MCF 10A (cell line): ENCODE measurements at regions of chr4 and their contacts with region 1.

Region 1: DNA sequence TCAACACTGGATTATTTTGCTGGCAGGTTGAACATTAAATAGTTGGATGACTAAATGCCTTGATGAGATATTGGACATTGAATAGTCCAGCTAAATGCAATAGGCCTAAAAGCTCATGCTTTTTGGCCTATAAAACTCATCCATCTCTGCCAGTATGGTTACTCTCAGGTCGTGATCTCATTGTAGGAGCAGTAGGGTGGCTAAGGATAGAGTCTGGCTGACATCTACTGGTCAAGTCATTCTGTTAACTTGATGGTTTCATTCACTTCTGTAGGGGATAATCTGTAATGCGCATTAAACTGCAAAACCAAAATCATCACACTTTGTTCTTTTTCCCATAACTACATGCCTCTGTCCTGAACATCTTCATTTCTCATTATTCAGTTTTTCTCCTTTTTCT is 227.0 kb downstream of the DKK2 start:
- DNase-seq: peak; percentile 63
- H3K4me3 Mint-ChIP-seq: no peak overlapping the region
- H3K27ac Mint-ChIP-seq: no peak overlapping the region
- H3K4me1 Mint-ChIP-seq: no peaks in the 10 kb centered on the region
- H3K27me3 Mint-ChIP-seq: no peaks in the 10 kb centered on the region
- CTCF ChIP-seq: peak; percentile 80

Region 2: GRCh38 chr4:106266201-106266600 is 542.9 kb before region 1 on chr4:
- CTCF ChIA-PET with region 1: no interaction called
- POLR2A ChIA-PET with region 1: no interaction called
- intact Hi-C with region 1: loop called (anchors 1 kb)
- DNase-seq: peak; percentile 52
- H3K4me3 Mint-ChIP-seq: no peak overlapping the region
- H3K27ac Mint-ChIP-seq: no peak overlapping the region
- H3K4me1 Mint-ChIP-seq: peaks cover 13% of the 10 kb centered on the region
- H3K27me3 Mint-ChIP-seq: no peaks in the 10 kb centered on the region
- CTCF ChIP-seq: peak; percentile 58

Region 3: GRCh38 chr4:106329041-106329618 is 479.9 kb before region 1 on chr4:
- CTCF ChIA-PET with region 1: interaction called, 5 read pairs
- POLR2A ChIA-PET with region 1: no interaction called
- intact Hi-C with region 1: loop called (anchors 1 kb)
- DNase-seq: peak; percentile 33
- H3K4me3 Mint-ChIP-seq: no peak overlapping the region
- H3K27ac Mint-ChIP-seq: no peak overlapping the region
- H3K4me1 Mint-ChIP-seq: no peaks in the 10 kb centered on the region
- H3K27me3 Mint-ChIP-seq: no peaks in the 10 kb centered on the region
- CTCF ChIP-seq: peak; percentile 58

Region 4: DNA sequence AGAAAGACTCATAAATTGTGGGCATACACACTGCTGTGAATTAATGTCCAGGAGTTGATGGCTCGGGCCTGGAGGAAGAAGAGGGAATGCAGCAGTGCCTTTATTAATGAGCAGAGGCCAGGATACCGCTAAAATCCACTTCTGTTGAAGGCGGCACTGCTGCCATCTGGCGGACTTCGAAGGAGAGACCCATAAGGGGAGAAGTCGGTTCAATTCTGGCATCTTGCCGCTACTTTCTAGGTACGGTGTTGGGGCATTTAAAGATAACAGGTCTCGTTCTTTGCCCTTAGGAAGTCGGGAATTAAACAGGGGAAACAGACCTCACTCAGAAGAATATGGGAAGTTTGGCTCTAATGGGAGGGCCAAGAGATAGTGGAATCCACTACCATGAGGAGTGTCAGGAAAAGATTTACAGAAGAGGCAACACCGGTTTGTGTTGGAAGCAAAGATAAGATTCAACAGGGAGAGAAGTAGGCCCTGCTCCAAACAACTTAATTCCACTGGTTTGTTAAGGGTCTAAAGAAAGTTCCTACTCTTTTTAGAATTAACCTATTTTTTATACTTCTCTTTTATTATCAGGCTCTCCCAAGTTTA is 306.9 kb before region 1 on chr4:
- CTCF ChIA-PET with region 1: interaction called, 5 read pairs
- POLR2A ChIA-PET with region 1: no interaction called
- intact Hi-C with region 1: loop called (anchors 2 kb)
- DNase-seq: peak; percentile 58
- H3K4me3 Mint-ChIP-seq: no peak overlapping the region
- H3K27ac Mint-ChIP-seq: no peak overlapping the region
- H3K4me1 Mint-ChIP-seq: peaks cover 5% of the 10 kb centered on the region
- H3K27me3 Mint-ChIP-seq: no peaks in the 10 kb centered on the region
- CTCF ChIP-seq: peak; percentile 40

Region 5: DNA sequence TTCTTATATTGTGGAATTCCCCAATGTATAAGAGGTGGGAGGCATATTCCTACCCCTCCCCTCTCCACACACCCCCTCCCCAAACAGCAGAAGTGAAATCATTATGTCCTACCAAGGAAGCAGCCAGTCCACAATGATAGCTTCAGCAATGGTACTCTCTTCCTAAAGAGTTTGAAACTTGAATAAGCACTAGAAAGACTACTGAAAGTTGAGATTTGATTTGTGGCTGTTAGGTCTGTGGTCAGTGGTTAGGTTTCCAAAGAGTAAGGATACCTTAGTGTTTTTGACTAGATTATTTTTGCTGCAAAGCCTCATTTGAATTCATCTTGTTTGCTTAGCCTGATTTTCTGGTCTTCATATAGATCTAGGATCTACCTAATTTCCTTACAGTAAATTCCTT is 15.1 kb before region 1 on chr4:
- CTCF ChIA-PET with region 1: interaction called, 10 read pairs
- POLR2A ChIA-PET with region 1: no interaction called
- intact Hi-C with region 1: no loop called
- DNase-seq: no peak
- H3K4me3 Mint-ChIP-seq: no peak overlapping the region
- H3K27ac Mint-ChIP-seq: no peak overlapping the region
- H3K4me1 Mint-ChIP-seq: no peaks in the 10 kb centered on the region
- H3K27me3 Mint-ChIP-seq: no peaks in the 10 kb centered on the region
- CTCF ChIP-seq: no peak

Region 6: DNA sequence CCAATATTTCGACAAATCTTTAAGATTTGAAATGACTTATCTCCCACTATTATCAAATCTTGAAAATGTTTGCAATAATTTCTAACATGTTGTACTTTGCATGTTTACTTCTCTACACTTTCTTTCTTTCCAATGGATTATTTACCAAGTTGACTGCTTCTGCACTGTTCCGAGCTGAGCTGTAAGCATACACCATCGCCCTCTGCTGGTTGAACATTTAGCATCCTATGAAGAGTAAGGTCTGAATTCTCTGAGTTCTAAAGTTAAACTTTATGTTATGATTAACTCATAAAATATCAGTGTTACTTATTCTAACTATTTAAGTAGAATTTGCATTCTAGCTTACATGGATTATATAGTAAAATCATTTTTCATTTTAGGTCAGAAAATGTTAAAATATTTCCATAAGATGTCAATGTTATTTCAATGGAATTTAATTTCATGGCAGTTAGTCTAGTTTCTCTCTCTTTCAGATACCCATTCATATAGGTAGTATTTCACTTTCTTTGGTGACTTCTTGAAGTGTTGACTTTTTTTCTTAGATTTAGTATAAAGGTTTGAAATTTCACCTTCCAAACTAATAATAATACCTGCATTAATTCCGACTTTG is 89.7 kb after region 1 on chr4:
- CTCF ChIA-PET with region 1: interaction called, 7 read pairs
- POLR2A ChIA-PET with region 1: no interaction called
- intact Hi-C with region 1: loop called (anchors 5 kb)
- DNase-seq: peak; percentile 71
- H3K4me3 Mint-ChIP-seq: no peak overlapping the region
- H3K27ac Mint-ChIP-seq: no peak overlapping the region
- H3K4me1 Mint-ChIP-seq: no peaks in the 10 kb centered on the region
- H3K27me3 Mint-ChIP-seq: no peaks in the 10 kb centered on the region
- CTCF ChIP-seq: peak; percentile 72